Activated naive CD4-positive, alpha-beta T cell treated with anti-CD3 and anti-CD28 coated beads for 36 hours (primary cell): ENCODE measurements at regions of chr2 and their contacts with region 1.

Region 1: DNA sequence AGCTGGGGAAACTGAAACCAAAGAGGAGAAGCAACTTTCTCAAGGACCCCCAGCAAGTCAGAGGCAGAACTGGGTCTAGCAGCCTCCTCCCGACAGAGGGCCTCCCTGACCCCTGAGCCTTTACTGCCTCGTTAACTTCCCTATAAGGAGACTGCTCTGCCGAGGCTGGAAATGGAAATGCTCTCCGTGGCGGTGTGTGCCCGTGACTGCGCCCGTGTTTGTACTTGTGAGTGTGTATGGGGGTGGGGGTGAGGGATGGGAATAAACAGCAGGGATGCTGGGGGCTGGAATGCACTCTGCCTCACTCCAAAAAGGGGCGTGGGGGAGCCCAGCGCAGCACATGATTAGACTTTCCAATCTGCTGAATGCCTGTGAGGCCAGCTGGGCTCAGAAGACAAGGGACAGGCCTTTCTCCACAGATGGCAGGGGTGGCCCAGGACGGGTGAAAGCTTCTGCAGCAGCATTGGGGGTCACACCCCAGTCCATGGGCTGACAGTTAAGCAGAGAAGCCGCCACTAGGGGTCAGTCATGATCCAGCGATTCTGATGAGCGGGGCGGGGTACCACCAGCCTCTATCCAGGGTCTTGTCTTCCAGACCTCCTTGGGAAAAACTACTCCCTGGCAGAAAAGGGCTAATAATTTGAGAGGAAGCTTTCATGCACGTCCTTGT is 26.8 kb downstream of the MPHOSPH10 start:
- DNase-seq: peak; percentile 65
- H3K4me3 Mint-ChIP-seq: no peak overlapping the region
- H3K27ac Mint-ChIP-seq: no peak overlapping the region
- H3K4me1 Mint-ChIP-seq: peaks cover 2% of the 10 kb centered on the region
- H3K27me3 Mint-ChIP-seq: no peaks in the 10 kb centered on the region

Region 2: DNA sequence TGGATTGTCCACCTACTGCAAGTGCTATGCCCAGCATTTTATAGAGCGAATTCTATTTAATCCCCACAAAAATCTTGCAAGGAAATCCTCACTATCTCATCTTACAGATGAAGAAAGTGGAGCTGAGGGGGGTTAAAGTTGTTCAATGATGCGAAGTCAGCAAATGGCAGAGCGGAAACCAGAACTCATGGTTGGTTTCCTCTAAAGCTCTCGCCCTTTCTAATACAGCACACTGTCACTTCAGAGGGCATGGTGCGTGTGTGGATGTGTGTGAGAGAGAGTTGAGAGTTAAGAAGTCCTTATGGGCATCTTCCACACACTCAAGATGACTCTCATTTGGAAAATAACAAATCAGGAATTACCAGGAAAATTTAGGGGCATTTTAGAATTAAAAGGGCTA is 682.0 kb before region 1 on chr2:
- CTCF ChIA-PET with region 1: no interaction called
- intact Hi-C with region 1: no loop called
- DNase-seq: peak; percentile 18
- H3K4me3 Mint-ChIP-seq: no peak overlapping the region
- H3K27ac Mint-ChIP-seq: no peak overlapping the region
- H3K4me1 Mint-ChIP-seq: peaks cover 39% of the 10 kb centered on the region
- H3K27me3 Mint-ChIP-seq: no peaks in the 10 kb centered on the region

Region 3: DNA sequence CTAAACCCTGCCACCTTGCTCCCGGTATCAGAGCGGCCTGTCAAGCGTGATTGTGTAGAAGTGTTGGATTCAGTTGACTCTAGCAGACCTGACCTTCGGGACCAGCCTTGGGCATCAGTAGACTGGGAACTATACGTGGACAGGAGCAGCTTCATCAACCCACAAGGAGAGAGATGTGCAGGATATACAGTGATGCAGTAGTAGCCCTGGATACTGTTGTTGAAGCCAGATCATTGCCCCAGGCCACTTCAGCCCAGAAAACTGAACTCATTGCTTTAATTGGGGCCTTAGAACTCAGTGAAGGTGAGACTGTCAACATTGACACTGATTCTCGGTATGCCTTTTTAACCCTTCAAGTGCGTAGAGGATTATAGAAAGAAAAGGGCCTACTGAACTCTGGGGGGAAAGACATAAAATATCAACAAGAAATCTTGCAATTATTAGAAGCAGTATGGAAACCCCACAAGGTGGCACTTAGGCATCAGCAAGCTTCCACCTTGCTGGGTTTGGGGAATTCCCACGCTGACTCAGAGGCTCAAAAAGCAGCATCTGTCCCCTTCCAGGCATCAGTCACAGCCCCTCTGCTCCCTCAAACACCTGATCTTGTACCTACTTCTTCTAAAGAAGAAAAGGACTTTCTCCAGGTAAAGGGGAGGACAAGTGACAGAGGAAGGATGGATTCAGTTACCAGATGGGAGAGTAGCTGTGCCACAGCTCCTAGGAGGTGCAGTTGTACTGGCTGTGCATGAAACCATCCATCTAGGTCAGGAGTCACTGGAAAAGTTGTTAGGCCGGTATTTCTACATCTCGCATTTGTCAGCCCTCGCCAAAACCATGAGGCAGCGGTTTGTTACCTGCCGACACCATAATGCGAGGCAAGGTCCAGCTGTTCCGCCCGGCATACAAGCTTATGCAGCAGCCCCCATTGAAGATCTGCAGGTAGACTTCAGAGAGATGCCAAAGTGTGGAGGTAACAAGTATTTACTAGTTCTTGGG is 107.6 kb before region 1 on chr2:
- CTCF ChIA-PET with region 1: interaction called, 8 read pairs
- intact Hi-C with region 1: loop called (anchors 1 kb)
- DNase-seq: peak; percentile 88
- H3K4me3 Mint-ChIP-seq: no peak overlapping the region
- H3K27ac Mint-ChIP-seq: no peak overlapping the region
- H3K4me1 Mint-ChIP-seq: peaks cover 13% of the 10 kb centered on the region
- H3K27me3 Mint-ChIP-seq: no peaks in the 10 kb centered on the region

Region 4: DNA sequence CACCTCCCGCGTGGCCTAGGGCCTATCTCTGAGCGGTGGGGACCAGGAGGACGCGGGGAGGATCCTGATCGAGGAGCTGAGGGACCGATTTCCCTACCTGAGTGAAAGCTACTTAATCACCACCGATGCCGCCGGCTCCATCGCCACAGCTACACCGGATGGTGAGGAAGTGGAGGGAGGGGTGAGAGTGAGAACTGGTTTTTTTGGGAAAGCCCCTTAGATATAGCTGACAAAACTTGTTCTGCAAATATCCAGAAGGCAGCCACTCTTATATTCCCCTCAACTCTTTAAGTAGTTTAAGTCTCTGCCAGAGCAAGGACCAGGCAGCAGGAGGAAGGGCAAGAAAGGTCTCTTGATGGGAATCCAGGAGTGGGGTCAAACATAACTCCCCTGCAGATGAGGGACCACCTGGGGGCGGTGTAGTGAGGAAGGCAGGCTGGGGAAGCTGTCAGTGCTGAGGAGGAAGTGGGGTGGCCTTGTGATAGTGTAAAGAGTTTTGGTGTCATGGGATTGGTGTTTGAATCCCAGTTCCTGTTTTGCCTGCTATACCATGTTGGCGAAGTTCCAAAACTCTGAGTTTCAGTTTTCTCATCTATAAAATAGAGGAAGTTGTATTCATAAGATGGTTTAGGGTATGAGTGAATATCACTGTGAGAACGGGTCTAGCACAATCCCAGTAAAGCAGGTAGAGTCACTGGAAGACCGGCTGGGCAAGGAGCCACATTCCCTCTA is 85.4 kb before region 1 on chr2:
- CTCF ChIA-PET with region 1: no interaction called
- intact Hi-C with region 1: no loop called
- DNase-seq: peak; percentile 86
- H3K4me3 Mint-ChIP-seq: peak overlapping the region; percentile 59
- H3K27ac Mint-ChIP-seq: peak overlapping the region; percentile 87
- H3K4me1 Mint-ChIP-seq: peaks cover 56% of the 10 kb centered on the region
- H3K27me3 Mint-ChIP-seq: no peaks in the 10 kb centered on the region

Region 5: DNA sequence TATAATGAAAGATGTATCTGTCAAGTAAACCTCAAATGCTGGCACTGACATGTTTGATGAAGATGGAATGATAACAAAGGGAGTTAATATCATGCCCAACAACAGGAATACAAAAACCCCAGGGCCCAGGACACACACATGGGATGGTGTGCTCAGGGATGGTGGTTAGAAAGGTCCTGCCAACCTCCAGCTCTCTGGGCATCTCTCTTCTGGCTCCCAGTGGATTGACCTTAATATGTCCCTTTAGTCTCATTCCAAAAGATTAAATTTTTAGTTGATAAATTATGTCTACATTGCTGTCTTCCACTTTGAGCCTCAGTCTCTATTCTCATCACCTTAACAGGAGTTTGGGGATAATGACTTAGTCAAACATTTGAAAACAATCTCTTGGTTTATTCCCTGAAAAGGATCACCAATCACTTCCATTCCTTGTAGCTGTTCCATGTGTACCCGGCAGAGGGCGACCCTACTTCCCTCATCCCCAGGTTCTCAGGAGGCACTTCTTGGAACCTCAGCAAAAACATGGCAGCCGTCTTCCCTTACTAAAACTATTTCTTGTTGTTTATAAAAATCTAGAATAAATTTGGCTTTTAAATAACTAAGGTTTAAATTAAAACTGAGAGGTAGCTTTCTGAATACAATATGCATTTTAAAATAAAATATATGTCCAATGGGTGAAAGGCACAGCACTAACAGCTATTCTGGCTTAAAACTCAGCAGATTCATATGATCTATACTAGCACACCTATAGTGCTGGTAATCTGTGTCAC is 56.9 kb before region 1 on chr2:
- CTCF ChIA-PET with region 1: interaction called, 9 read pairs
- intact Hi-C with region 1: loop called (anchors 1 kb)
- DNase-seq: peak; percentile 75
- H3K4me3 Mint-ChIP-seq: no peak overlapping the region
- H3K27ac Mint-ChIP-seq: no peak overlapping the region
- H3K4me1 Mint-ChIP-seq: peaks cover 3% of the 10 kb centered on the region
- H3K27me3 Mint-ChIP-seq: peaks cover 3% of the 10 kb centered on the region

Region 6: GRCh38 chr2:71143782-71144181 is 13.5 kb before region 1 on chr2:
- CTCF ChIA-PET with region 1: interaction called, 14 read pairs
- intact Hi-C with region 1: no loop called
- DNase-seq: no peak
- H3K4me3 Mint-ChIP-seq: no peak overlapping the region
- H3K27ac Mint-ChIP-seq: no peak overlapping the region
- H3K4me1 Mint-ChIP-seq: no peaks in the 10 kb centered on the region
- H3K27me3 Mint-ChIP-seq: no peaks in the 10 kb centered on the region

Region 7: GRCh38 chr2:71276311-71277146 is 119.3 kb after region 1 on chr2:
- CTCF ChIA-PET with region 1: no interaction called
- intact Hi-C with region 1: loop called (anchors 5 kb)
- DNase-seq: peak; percentile 87
- H3K4me3 Mint-ChIP-seq: peak overlapping the region; percentile 69
- H3K27ac Mint-ChIP-seq: no peak overlapping the region
- H3K4me1 Mint-ChIP-seq: peaks cover 8% of the 10 kb centered on the region
- H3K27me3 Mint-ChIP-seq: peaks cover 68% of the 10 kb centered on the region

Region 8: GRCh38 chr2:71299507-71299906 is 142.2 kb after region 1 on chr2:
- CTCF ChIA-PET with region 1: interaction called, 7 read pairs
- intact Hi-C with region 1: loop called (anchors 5 kb)
- DNase-seq: no peak
- H3K4me3 Mint-ChIP-seq: no peak overlapping the region
- H3K27ac Mint-ChIP-seq: no peak overlapping the region
- H3K4me1 Mint-ChIP-seq: no peaks in the 10 kb centered on the region
- H3K27me3 Mint-ChIP-seq: peaks cover 5% of the 10 kb centered on the region

Region 9: GRCh38 chr2:71510196-71510807 is 353.0 kb after region 1 on chr2:
- CTCF ChIA-PET with region 1: interaction called, 4 read pairs
- intact Hi-C with region 1: loop called (anchors 1 kb)
- DNase-seq: peak; percentile 80
- H3K4me3 Mint-ChIP-seq: no peak overlapping the region
- H3K27ac Mint-ChIP-seq: no peak overlapping the region
- H3K4me1 Mint-ChIP-seq: no peaks in the 10 kb centered on the region
- H3K27me3 Mint-ChIP-seq: peaks cover 3% of the 10 kb centered on the region